SK-N-SH (cell line): ENCODE measurements at regions of chr11 and their contacts with region 1.

Region 1: GRCh38 chr11:65817835-65818742 is 15.7 kb upstream of the SNX32 start:
- DNase-seq: peak; percentile 99
- H3K4me3 ChIP-seq: peak overlapping the region; percentile 62 to 75
- H3K27ac ChIP-seq: peak overlapping the region in 1 of 2 experiments; percentile 62; a peak in 1 of 4 replicates
- H3K4me1 ChIP-seq: peaks cover 0 to 3% of the 10 kb centered on the region in 2 experiments; a peak in 1 of 4 replicates
- H3K27me3 ChIP-seq: no peaks in the 10 kb centered on the region
- CTCF ChIP-seq: peak; percentile 91
- EP300 ChIP-seq: no peak
- RAD21 ChIP-seq: peak; percentile 89

Region 2: DNA sequence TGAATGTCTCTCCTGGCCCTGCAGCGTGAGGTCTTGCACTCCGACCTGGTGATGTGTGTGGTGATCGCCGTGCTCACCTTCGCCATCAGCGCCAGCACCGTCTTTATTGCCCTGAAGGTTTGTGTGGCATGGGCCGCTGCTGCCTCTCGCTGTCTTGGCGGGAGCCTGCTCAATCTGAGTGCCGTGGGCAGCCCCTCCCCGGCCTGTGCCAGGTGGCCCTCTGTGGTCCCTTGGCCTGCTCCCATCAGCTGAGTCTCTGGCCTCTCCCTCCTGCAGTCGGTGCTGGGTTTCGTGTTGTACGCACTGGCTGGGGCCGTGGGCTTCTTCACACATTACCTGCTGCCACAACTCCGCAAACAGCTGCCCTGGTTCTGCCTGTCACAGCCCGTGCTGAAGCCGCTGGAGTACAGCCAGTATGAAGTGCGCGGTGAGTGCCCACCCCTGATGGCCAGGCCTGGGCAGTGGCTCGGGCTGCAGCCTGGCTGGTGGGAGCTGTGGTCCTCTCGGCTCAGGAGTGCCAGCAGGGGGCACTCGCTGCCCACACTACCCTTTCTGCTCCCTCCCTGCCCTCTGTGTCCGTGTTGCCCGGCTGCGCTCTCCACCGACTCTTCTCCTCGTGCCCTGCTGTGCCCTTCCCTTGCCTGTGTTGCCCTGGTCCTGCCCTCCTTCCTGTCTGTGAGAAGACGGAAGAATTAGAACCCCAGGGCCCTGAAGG is 192.3 kb before region 1 on chr11:
- CTCF ChIA-PET with region 1: interaction called, 10 read pairs
- POLR2A ChIA-PET with region 1: no interaction called
- DNase-seq: peak; percentile 89
- H3K4me3 ChIP-seq: no peak overlapping the region
- H3K27ac ChIP-seq: no peak overlapping the region
- H3K4me1 ChIP-seq: no peaks in the 10 kb centered on the region
- H3K27me3 ChIP-seq: no peaks in the 10 kb centered on the region
- CTCF ChIP-seq: peak; percentile 54
- EP300 ChIP-seq: no peak
- RAD21 ChIP-seq: peak; percentile 69

Region 3: DNA sequence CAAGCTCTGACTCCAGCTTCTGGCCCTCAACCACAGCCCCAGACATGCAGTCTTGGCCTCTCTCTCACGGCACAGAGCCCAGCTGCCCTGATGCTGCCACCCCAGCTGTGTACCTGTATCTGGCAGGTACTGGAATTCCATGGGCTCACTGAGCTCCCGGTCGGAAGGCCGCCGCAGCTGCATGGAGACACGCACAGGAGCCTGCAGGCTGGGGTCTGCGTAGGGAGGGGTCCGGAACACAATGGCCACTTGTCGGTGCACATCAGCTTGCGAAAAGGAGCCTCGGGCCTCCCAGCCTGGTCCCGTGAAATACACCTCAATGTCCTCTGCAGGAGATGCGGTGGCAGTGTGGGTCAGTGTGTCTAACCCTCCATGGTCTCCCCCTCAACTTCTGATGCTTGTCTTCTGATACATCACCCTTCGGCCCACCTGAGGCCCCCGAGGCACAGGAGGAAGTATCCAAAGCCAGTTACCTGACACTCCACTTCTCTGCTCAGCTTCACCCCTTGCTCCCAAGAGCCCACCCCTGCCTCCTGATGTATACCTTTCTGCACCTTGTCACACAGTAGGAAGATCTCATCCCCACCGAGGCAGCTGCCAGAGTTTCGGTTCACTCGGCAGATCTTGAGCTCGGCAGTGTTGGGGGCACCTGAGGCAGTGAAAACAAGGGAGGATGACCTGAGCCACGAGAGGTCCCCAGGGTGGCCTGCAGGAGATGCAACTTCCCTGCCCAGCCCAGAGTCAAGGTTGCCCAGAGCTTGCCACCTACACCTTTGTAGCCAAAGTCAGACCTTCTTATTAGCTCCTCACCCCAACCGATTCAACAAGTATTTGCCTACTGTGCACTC is 159.7 kb before region 1 on chr11:
- CTCF ChIA-PET with region 1: no interaction called
- POLR2A ChIA-PET with region 1: no interaction called
- DNase-seq: no peak
- H3K4me3 ChIP-seq: no peak overlapping the region
- H3K27ac ChIP-seq: no peak overlapping the region
- H3K4me1 ChIP-seq: peaks cover 9 to 17% of the 10 kb centered on the region in 2 experiments
- H3K27me3 ChIP-seq: no peaks in the 10 kb centered on the region
- CTCF ChIP-seq: no peak
- EP300 ChIP-seq: no peak
- RAD21 ChIP-seq: no peak

Region 4: DNA sequence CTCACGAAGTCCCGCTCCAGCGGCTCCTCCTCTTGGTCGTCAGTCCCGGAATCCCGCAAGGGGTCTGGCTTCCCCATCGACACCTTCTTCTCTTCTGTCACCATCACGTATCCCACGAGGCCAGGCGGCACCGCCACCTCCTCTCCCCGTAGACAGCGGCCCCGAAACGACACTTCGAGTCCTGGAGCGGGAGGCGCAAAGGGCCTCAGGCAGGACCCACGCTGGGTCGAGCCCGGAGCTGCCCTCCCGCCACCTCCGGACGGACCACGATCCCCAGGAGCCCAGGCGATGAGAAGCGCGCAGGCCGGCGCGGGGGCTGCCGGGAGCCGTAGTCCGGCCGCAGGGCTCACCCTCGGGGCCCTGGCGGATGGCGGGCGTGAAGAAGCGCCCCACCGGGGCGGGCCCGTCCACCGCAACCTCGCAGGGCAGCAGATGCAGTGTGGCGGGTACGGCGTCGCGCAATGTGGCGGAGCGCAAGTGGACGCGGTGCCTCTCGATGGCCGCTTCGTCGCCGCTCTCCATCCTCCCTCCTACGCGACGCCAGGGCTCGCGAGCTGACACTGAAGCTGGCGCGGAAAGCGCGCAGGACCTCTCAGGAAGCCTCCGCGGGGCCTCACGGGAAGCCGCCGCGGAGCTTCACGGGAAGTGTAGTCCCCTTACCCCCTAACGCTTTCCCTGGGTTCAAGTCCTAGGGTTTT is 97.7 kb before region 1 on chr11 and contains the start of gene RNASEH2C:
- CTCF ChIA-PET with region 1: interaction called, 111 read pairs
- POLR2A ChIA-PET with region 1: interaction called, 3 read pairs
- DNase-seq: peak; percentile 93
- H3K4me3 ChIP-seq: peak within 1 kb of the TSS; percentile 76 to 85
- H3K27ac ChIP-seq: peak within 1 kb of the TSS; percentile 48 to 94; a peak in 3 of 4 replicates
- H3K4me1 ChIP-seq: peaks cover 7 to 19% of the 10 kb centered on the region in 2 experiments; a peak in 1 of 4 replicates
- H3K27me3 ChIP-seq: no peaks in the 10 kb centered on the region
- CTCF ChIP-seq: no peak
- EP300 ChIP-seq: no peak
- RAD21 ChIP-seq: no peak
- polyA plus RNA-seq, gene RNASEH2C: 43.9 and 50.9 TPM in 2 replicates

Region 5: DNA sequence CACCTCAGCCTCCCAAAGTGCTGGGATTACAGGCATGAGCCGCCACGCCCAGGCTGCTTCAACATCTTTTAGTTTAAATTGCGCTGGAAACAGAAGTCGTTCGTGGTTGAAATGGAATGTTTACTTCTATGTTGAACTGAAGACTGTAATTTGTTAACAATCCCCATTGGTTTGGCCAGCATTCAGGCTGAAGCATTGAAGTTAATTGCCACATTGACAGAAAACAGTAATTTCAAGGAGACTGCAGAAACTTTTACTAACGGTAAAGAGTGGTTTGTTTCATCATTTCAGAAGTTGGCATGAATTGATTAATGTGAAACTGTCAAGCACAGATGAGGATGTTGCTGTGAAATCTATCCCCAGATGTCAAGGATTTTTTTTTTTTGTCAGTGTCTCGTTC is 51.6 kb before region 1 on chr11:
- CTCF ChIA-PET with region 1: interaction called, 11 read pairs
- POLR2A ChIA-PET with region 1: no interaction called
- DNase-seq: no peak
- H3K4me3 ChIP-seq: no peak overlapping the region
- H3K27ac ChIP-seq: no peak overlapping the region
- H3K4me1 ChIP-seq: no peaks in the 10 kb centered on the region
- H3K27me3 ChIP-seq: no peaks in the 10 kb centered on the region
- CTCF ChIP-seq: no peak
- EP300 ChIP-seq: no peak
- RAD21 ChIP-seq: no peak

Region 6: GRCh38 chr11:65779851-65780577 is 38.1 kb before region 1 on chr11:
- CTCF ChIA-PET with region 1: interaction called, 42 read pairs
- POLR2A ChIA-PET with region 1: no interaction called
- DNase-seq: peak; percentile 87
- H3K4me3 ChIP-seq: peak overlapping the region; percentile 62 to 70
- H3K27ac ChIP-seq: peak overlapping the region in 1 of 2 experiments; percentile 35; a peak in 2 of 4 replicates
- H3K4me1 ChIP-seq: peaks cover 0 to 13% of the 10 kb centered on the region in 2 experiments; a peak in 1 of 4 replicates
- H3K27me3 ChIP-seq: no peaks in the 10 kb centered on the region
- CTCF ChIP-seq: peak; percentile 71
- EP300 ChIP-seq: no peak
- RAD21 ChIP-seq: peak; percentile 12; the same call in 1 of the 2 replicates

Region 7: DNA sequence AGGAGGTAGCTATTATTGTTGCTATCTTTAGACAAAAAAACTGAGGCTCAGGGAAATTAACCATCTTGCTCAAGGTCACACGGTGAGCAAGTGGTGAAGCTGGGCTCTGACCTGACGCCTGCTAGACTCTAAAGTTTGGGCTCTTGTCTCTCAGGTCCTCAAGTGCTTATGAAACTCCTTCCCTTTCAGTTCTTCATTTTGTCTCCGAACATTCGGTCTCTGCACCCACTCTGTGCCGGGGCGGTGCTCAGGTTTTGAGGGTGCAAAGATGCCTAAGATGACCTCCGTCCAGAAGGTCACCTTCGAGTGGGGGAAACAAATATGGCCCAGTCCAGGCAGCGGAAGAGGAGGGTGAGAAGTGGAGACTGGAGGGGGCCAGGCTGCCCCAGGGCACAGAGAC is 15.2 kb before region 1 on chr11:
- CTCF ChIA-PET with region 1: interaction called, 21 read pairs
- POLR2A ChIA-PET with region 1: no interaction called
- DNase-seq: no peak
- H3K4me3 ChIP-seq: no peak overlapping the region
- H3K27ac ChIP-seq: no peak overlapping the region
- H3K4me1 ChIP-seq: no peaks in the 10 kb centered on the region
- H3K27me3 ChIP-seq: peaks cover 39% of the 10 kb centered on the region; the same call in 1 of the 2 replicates
- CTCF ChIP-seq: no peak
- EP300 ChIP-seq: no peak
- RAD21 ChIP-seq: no peak

Region 8: DNA sequence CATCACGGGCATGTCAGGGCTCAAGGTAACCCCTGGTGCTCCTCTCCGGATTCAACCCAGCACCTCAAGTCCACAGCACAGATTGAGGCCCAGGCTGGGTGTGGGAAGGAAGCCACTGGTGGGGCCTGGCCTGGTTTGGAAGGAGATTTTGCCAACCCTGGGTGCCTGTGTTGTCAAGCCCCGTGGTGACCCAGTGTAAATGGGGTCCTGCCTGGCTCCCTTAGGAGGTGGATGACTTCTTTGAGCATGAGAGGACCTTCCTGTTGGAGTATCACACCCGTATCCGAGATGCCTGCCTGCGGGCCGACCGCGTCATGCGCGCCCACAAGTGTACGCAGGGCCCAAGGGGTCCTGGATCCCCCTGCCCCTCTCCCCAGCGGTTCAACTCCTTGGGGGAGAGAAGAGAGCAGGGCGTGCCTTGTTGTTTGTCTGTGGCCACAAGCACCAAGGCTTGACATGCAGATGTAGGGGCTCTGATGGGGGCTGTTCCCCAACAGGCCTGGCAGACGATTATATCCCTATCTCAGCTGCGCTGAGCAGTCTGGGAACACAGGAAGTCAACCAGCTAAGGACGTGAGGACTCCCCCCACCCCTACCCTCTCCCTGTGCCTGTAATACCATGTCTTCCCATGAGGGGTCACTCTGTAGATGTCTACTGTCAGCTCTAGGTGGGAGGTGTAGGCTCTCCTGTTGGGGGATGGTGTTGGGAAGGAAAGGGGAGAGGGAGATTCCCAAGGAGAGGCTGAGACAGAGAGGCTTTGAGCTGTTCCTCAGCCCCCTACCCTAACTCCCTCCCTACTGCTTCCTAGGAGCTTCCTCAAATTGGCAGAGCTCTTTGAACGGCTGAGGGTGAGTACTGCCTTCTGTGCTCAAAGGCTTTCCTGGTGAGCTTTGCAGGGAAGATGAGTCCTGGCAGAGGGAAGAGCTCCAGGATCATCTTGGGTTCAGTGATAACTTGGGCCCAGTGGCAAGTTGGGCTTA is 33.0 kb after region 1 on chr11:
- CTCF ChIA-PET with region 1: interaction called, 12 read pairs
- POLR2A ChIA-PET with region 1: no interaction called
- DNase-seq: peak; percentile 76
- H3K4me3 ChIP-seq: no peak overlapping the region
- H3K27ac ChIP-seq: no peak overlapping the region
- H3K4me1 ChIP-seq: peaks cover 0 to 16% of the 10 kb centered on the region in 2 experiments; a peak in 2 of 4 replicates
- H3K27me3 ChIP-seq: no peaks in the 10 kb centered on the region
- CTCF ChIP-seq: peak; percentile 61
- EP300 ChIP-seq: no peak
- RAD21 ChIP-seq: no peak